Posterior vena cava (tissue), 2 donors: ENCODE measurements at regions of chrX and their contacts with region 1.

Region 1: GRCh38 chrX:154980330-154981096 is 42.0 kb downstream of the F8 start:
- DNase-seq: peak; percentile 83

Region 2: GRCh38 chrX:155068165-155068564 is 87.7 kb after region 1 on chrX:
- intact Hi-C with region 1: loop called in 1 of 2 experiments (anchors 10 kb)
- DNase-seq: no peak